ENCODE measurements at regions of chr2 and their contacts with region 1.

Region 1: DNA sequence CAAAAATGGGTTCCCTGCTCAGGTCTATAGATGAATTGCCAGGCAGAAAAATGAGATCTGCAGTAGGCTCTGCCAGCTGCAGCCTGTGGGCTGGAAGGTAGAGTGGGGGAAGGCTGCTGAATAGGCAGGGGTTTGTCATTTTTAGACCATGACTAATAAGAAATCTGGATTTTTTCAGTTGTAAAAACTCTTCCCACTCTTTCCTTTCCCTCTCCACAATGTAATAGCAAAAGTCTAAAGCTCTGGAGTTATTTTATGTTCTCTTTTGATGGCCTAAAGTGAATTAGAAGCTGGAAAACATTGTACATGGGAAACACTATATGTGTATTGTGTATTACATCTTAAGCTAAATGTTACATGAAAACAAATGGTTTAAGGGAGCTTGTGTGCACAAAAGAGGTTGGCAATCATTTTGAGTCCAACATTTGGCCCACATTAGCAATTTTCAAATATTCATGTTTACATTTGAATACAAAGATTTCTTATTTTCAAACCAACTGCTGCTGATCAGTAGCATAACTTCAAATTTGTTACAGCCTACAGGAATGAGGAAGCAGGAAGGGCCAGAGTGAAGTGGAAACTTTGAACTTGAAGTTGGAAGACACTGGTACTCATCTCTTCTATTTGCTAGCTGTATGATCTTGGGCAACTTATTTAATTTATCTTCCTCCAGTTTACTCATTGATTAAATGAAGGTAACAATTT is 407.1 kb downstream of the SLC4A3 start:
- DNase-seq: no peak
- ATAC-seq: no peak
- H3K4me3 ChIP-seq: no peak overlapping the region
- H3K4me3 Mint-ChIP-seq: no peak overlapping the region
- H3K27ac ChIP-seq: no peak overlapping the region
- H3K27ac Mint-ChIP-seq: no peak overlapping the region
- H3K4me1 ChIP-seq: no peaks in the 10 kb centered on the region
- H3K4me1 Mint-ChIP-seq: no peaks in the 10 kb centered on the region
- H3K27me3 ChIP-seq: no peaks in the 10 kb centered on the region
- H3K27me3 Mint-ChIP-seq: no peaks in the 10 kb centered on the region

Region 2: DNA sequence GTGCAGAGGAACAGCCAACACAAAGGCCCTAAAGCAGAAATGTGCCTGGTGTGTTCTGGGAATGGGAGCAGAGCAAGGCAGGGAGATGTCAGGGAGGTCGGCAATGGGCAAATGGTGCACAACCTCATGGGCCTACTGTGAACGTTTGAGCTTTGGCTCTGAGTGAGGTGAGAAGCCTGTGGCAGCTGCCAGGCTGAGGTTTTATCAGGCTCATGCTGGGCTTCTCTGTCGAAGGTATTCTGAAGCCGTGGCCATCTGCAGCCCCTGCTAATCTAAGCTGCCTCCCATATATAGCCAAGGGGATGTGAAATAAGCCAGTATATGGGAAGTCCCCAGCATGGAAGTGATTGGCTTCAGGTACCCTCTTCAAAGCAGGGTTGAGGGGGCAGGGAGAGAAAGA is 213.8 kb before region 1 on chr2:
- CTCF ChIA-PET with region 1: no interaction called
- POLR2A ChIA-PET with region 1: no interaction called
- DNase-seq: no peak
- ATAC-seq: no peak
- H3K4me3 ChIP-seq: no peak overlapping the region
- H3K4me3 Mint-ChIP-seq: no peak overlapping the region
- H3K27ac ChIP-seq: no peak overlapping the region
- H3K27ac Mint-ChIP-seq: no peak overlapping the region
- H3K4me1 ChIP-seq: no peaks in the 10 kb centered on the region
- H3K4me1 Mint-ChIP-seq: no peaks in the 10 kb centered on the region
- H3K27me3 ChIP-seq: no peaks in the 10 kb centered on the region
- H3K27me3 Mint-ChIP-seq: peaks cover 9 to 15% of the 10 kb centered on the region in 2 donors

Region 3: GRCh38 chr2:220053919-220054318 is 19.3 kb after region 1 on chr2:
- CTCF ChIA-PET with region 1: interaction called in 1 of 2 experiments, 13 read pairs
- POLR2A ChIA-PET with region 1: no interaction called
- DNase-seq: no peak
- ATAC-seq: no peak
- H3K4me3 ChIP-seq: no peak overlapping the region
- H3K4me3 Mint-ChIP-seq: no peak overlapping the region
- H3K27ac ChIP-seq: no peak overlapping the region
- H3K27ac Mint-ChIP-seq: no peak overlapping the region
- H3K4me1 ChIP-seq: no peaks in the 10 kb centered on the region
- H3K4me1 Mint-ChIP-seq: no peaks in the 10 kb centered on the region
- H3K27me3 ChIP-seq: no peaks in the 10 kb centered on the region
- H3K27me3 Mint-ChIP-seq: no peaks in the 10 kb centered on the region

Measured in T-cell (primary cell).